ENCODE measurements at regions of chrX and their contacts with region 1.

Region 1: DNA sequence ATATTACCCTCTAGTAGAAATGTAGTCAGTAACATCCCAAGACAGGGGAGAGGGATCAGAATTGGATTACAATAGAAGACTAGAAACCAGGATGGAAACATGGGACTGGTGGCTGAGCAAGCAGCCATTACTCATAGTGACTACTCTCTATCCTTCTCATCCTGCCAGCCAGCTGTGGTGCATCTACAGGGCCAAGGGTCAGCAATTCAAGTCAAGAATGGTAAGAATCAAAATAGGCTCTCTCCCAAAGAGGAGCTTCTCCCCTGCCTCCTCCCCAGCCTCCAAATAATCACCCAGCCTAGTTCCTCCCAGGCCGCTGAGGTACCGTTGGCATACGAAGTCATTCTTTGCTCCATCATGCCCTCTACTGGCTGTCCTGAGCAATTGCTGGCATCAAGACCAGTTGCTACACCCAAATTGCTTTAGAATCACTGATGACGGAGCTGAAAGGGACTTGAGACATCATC is 19.4 kb downstream of the AWAT2 start:
- DNase-seq: peak; percentile 73
- H3K4me3 Mint-ChIP-seq: no peak overlapping the region
- H3K27ac Mint-ChIP-seq: no peak overlapping the region
- H3K4me1 Mint-ChIP-seq: peaks cover 40% of the 10 kb centered on the region
- H3K27me3 Mint-ChIP-seq: no peaks in the 10 kb centered on the region
- CTCF ChIP-seq: peak; percentile 70

Region 2: GRCh38 chrX:69493193-69493592 is 537.1 kb before region 1 on chrX:
- CTCF ChIA-PET with region 1: interaction called, 8 read pairs
- intact Hi-C with region 1: loop called (anchors 1 kb)
- DNase-seq: peak; percentile 69
- H3K4me3 Mint-ChIP-seq: no peak overlapping the region
- H3K27ac Mint-ChIP-seq: no peak overlapping the region
- H3K4me1 Mint-ChIP-seq: peaks cover 11% of the 10 kb centered on the region
- H3K27me3 Mint-ChIP-seq: peaks cover 13% of the 10 kb centered on the region
- CTCF ChIP-seq: peak; percentile 48

Region 3: DNA sequence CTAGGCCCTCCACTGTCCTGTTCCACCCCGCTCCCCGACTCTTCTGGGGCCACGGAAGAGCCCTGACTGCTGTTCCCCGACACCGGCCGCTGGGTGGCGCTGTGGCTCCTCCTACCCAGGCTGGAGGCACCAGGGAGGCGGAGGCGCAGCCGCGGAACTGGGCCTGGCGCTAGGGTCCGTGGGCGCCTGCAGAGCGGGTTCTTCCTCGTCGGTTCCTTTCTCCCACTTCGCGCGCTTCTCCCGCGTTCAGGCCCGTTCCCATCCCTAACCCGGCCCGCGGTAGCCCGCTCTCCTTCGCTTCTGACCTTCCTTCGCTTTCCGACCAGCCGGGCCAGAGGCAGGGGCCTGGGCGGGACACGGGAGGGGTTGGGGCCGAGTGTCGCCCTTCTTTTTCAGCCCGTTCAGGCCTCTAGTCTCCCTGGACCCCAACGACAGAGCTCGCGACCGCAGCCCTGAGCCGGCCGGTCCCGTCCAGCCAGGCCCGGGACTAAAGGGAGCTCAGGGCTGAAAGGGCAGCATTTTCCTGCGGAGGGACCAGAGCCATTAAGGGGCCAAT is 491.9 kb before region 1 on chrX:
- CTCF ChIA-PET with region 1: interaction called, 8 read pairs
- intact Hi-C with region 1: loop called (anchors 1 kb)
- DNase-seq: peak; percentile 82
- H3K4me3 Mint-ChIP-seq: peak overlapping the region; percentile 82
- H3K27ac Mint-ChIP-seq: peak overlapping the region; percentile 77
- H3K4me1 Mint-ChIP-seq: peaks cover 12% of the 10 kb centered on the region
- H3K27me3 Mint-ChIP-seq: no peaks in the 10 kb centered on the region
- CTCF ChIP-seq: peak; percentile 75

Region 4: DNA sequence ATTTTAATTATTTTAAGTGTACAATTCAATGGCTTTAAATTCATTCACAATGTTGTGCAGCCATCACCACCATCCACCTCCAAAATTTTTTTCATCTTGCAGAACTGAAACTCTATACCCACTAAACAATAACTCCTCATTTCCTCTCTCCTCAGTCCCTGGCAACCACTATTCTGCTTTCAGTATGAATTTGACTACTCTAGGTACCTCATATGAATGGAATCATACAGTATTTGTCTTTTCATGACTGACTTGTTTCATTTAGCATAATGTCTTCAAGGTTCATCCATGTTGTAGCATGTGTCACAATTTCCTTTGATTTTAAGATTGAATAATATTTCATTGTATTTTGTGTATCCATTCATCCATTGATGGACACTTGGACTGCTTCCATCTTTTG is 306.4 kb after region 1 on chrX:
- CTCF ChIA-PET with region 1: no interaction called
- intact Hi-C with region 1: no loop called
- DNase-seq: no peak
- H3K4me3 Mint-ChIP-seq: no peak overlapping the region
- H3K27ac Mint-ChIP-seq: no peak overlapping the region
- H3K4me1 Mint-ChIP-seq: no peaks in the 10 kb centered on the region
- H3K27me3 Mint-ChIP-seq: no peaks in the 10 kb centered on the region
- CTCF ChIP-seq: no peak